Activated CD8-positive, alpha-beta T cell treated with anti-CD3 and anti-CD28 coated beads, Interleukin-2, amount 10 ng/mL, durations not matched to agents 7 days and 5 days (primary cell): ENCODE measurements at regions of chr6 and their contacts with region 1.

Region 1: GRCh38 chr6:27753668-27754407 is 158.4 kb downstream of the OR2B2 start:
- DNase-seq: peak; percentile 86
- ATAC-seq: peak; percentile 69
- H3K4me3 Mint-ChIP-seq: peak overlapping the region; percentile 90
- H3K27ac Mint-ChIP-seq: peak overlapping the region; percentile 76
- H3K4me1 Mint-ChIP-seq: peaks cover 41% of the 10 kb centered on the region
- H3K27me3 Mint-ChIP-seq: peaks cover 6% of the 10 kb centered on the region

Region 2: GRCh38 chr6:27177485-27178406 is 576.1 kb before region 1 on chr6:
- CTCF ChIA-PET with region 1: interaction called, 26 read pairs
- POLR2A ChIA-PET with region 1: interaction called, 3 read pairs
- DNase-seq: peak; percentile 84
- ATAC-seq: peak; percentile 88
- H3K4me3 Mint-ChIP-seq: peak overlapping the region; percentile 92
- H3K27ac Mint-ChIP-seq: peak overlapping the region; percentile 81
- H3K4me1 Mint-ChIP-seq: peaks cover 17% of the 10 kb centered on the region
- H3K27me3 Mint-ChIP-seq: peaks cover 30% of the 10 kb centered on the region

Region 3: DNA sequence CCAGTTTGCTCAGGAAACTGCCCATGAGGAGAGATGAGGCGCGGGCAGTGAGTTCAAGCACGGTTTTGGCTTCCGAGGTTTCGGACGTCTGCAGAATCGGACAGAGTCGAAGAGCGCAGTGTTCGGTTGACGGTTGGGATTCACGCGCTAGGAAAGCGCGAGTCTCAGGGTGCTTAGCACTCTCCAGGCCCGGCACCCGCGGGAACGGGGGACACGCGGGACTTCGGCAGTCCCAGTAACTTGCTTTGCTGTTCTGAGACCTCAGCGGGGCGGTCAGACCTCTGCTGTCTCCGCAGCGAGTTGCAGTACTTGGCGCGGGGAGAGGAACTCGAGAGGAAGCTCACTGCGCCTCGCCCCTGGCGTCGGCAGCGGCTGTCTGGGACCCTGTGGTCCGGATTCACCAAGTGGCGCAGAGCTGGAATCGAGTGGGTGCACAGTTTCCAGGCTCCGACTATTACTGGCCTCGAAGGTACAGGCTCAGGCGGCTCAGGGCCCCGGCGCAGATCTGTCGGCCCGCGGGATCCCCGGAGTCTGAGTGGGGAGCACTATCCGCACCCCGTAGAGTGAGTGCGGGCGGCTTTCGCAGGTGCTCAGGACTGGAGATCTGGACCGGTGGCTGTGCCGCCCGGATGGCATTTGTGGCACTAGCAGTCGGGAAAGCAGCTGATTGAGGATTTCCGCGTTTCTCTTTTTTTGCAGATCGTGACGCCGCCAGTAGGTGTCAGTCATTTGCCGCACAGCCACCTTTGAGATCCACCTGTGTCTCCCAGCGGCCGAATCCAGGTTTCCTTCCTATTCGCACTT is 441.5 kb before region 1 on chr6 and contains the start of gene POM121L2:
- CTCF ChIA-PET with region 1: interaction called, 11 read pairs
- POLR2A ChIA-PET with region 1: no interaction called
- DNase-seq: peak; percentile 74
- ATAC-seq: peak; percentile 76
- H3K4me3 Mint-ChIP-seq: peak within 1 kb of the TSS; percentile 77
- H3K27ac Mint-ChIP-seq: no peak within 1 kb of the TSS
- H3K4me1 Mint-ChIP-seq: peaks cover 14% of the 10 kb centered on the region
- H3K27me3 Mint-ChIP-seq: peaks cover 65% of the 10 kb centered on the region
- total RNA-seq, gene POM121L2: not detected

Region 4: GRCh38 chr6:27518881-27519795 is 234.7 kb before region 1 on chr6:
- CTCF ChIA-PET with region 1: interaction called, 22 read pairs
- POLR2A ChIA-PET with region 1: no interaction called
- DNase-seq: peak; percentile 65
- ATAC-seq: peak; percentile 85
- H3K4me3 Mint-ChIP-seq: peak overlapping the region; percentile 70
- H3K27ac Mint-ChIP-seq: peak overlapping the region; percentile 47
- H3K4me1 Mint-ChIP-seq: peaks cover 11% of the 10 kb centered on the region
- H3K27me3 Mint-ChIP-seq: peaks cover 28% of the 10 kb centered on the region

Region 5: DNA sequence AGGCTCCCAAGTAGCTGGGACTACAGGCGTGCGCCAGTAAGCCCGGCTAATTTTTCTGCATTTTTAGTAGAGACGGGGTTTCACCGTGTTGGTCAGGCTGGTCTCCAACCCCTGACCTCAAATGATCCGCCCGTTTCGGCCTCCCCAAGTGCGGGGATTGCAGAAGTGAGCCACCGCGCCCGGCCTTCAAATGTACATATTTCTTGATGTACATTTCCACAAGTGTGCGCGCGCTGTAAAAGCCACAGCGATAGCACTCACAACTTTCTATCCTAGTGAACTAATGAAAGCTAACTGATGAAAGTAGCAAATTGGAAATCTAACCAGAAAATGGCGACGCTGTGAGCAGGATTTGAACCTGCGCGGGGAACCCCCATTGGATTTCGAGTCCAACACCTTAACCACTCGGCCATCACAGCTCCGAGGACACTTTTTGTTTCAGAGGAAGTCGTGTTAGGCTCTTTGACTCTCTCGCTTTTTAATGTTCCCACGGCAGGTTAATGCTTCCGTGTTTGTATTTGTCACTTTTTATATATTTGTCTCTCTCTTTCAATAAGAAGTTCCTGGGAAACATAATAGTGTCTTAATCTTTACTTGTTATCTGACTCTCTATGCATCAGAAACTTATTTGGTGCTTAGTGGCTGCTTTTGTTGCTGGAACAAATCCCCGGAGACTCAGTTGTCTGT is 81.6 kb before region 1 on chr6:
- CTCF ChIA-PET with region 1: interaction called, 17 read pairs
- POLR2A ChIA-PET with region 1: no interaction called
- DNase-seq: peak; percentile 72
- ATAC-seq: peak; percentile 62
- H3K4me3 Mint-ChIP-seq: peak overlapping the region; percentile 46
- H3K27ac Mint-ChIP-seq: peak overlapping the region; percentile 12
- H3K4me1 Mint-ChIP-seq: peaks cover 53% of the 10 kb centered on the region
- H3K27me3 Mint-ChIP-seq: peaks cover 56% of the 10 kb centered on the region

Region 6: DNA sequence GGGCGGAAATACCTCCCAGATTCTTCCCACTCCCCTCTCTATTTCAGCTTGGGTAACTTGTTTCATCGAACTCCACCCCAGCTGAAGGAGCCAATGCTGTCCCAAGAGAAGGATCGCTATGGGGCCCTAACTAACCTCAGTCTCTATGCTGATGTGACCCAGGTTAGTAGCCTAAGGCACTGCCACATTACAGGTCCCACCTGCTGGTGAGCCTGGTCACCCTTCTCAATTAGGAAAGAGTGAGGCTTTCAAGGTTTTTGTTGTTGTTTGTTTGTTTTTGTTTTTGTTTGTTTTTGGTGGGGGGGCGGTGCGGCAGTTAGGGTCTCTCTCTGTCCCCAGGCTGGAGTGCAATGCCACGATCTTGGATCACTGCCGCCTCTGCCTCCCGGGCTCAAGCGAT is 10.0 kb before region 1 on chr6:
- CTCF ChIA-PET with region 1: interaction called, 22 read pairs
- POLR2A ChIA-PET with region 1: no interaction called
- DNase-seq: no peak
- ATAC-seq: no peak
- H3K4me3 Mint-ChIP-seq: no peak overlapping the region
- H3K27ac Mint-ChIP-seq: no peak overlapping the region
- H3K4me1 Mint-ChIP-seq: peaks cover 9% of the 10 kb centered on the region
- H3K27me3 Mint-ChIP-seq: peaks cover 28% of the 10 kb centered on the region

Region 7: GRCh38 chr6:27795697-27796494 is 42.1 kb after region 1 on chr6:
- CTCF ChIA-PET with region 1: interaction called, 19 read pairs
- POLR2A ChIA-PET with region 1: no interaction called
- DNase-seq: peak; percentile 83
- ATAC-seq: peak; percentile 52
- H3K4me3 Mint-ChIP-seq: peak overlapping the region; percentile 1
- H3K27ac Mint-ChIP-seq: no peak overlapping the region
- H3K4me1 Mint-ChIP-seq: peaks cover 49% of the 10 kb centered on the region
- H3K27me3 Mint-ChIP-seq: peaks cover 13% of the 10 kb centered on the region